A673 (cell line): ENCODE measurements at regions of chr4 and their contacts with region 1.

Region 1: DNA sequence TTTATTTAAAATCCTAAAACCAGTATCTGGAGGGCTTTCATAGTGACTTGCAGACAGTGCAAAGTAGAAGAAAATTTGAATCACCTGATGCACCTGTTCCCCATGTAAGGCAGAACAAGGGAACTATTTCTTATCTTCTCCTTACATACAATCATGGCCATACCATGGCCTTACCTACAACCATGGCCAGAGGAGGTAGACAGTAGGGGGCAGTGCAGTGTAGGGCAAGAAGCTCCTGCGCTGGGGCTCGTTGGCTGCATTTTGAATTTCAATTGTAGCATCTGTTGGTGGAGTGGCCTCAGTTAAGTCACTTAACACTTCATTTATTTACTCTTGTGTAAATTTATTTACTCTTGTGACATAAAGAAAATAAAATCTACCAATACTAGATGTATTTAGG is 33.0 kb downstream of the GALNTL6 start:
- DNase-seq: peak; percentile 78
- H3K4me3 ChIP-seq: no peak overlapping the region
- H3K27ac ChIP-seq: no peak overlapping the region
- H3K4me1 ChIP-seq: no peaks in the 10 kb centered on the region
- H3K27me3 ChIP-seq: no peaks in the 10 kb centered on the region
- CTCF ChIP-seq: peak; percentile 88

Region 2: GRCh38 chr4:170259631-170260153 is 1586.5 kb before region 1 on chr4:
- CTCF ChIA-PET with region 1: no interaction called
- POLR2A ChIA-PET with region 1: no interaction called
- intact Hi-C with region 1: loop called (anchors 5 kb)
- DNase-seq: peak; percentile 95
- H3K4me3 ChIP-seq: no peak overlapping the region
- H3K27ac ChIP-seq: no peak overlapping the region
- H3K4me1 ChIP-seq: no peaks in the 10 kb centered on the region
- H3K27me3 ChIP-seq: peaks cover 19% of the 10 kb centered on the region
- CTCF ChIP-seq: peak; percentile 99

Region 3: GRCh38 chr4:171524903-171525302 is 321.3 kb before region 1 on chr4:
- CTCF ChIA-PET with region 1: no interaction called
- POLR2A ChIA-PET with region 1: no interaction called
- intact Hi-C with region 1: no loop called
- DNase-seq: no peak
- H3K4me3 ChIP-seq: no peak overlapping the region
- H3K27ac ChIP-seq: no peak overlapping the region
- H3K4me1 ChIP-seq: no peaks in the 10 kb centered on the region
- H3K27me3 ChIP-seq: no peaks in the 10 kb centered on the region
- CTCF ChIP-seq: no peak

Region 4: DNA sequence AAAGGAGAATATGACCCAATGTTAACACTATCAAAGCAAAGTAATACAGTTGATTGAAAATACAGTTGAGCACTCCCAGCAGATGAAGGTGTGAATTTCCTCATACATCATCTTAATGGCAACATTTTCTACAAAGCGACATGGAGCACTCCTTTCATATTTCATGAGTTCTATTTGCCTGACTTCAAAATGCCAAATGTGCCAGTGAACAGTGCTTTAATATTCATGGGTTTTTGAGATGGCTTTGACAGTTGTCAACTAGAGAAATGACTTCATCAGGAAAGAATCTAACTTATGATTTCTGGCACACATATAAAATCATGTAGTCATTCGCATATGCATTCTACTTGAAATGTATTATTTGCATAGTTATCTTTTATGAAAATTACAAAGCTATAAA is 189.3 kb after region 1 on chr4:
- CTCF ChIA-PET with region 1: no interaction called
- POLR2A ChIA-PET with region 1: no interaction called
- intact Hi-C with region 1: loop called (anchors 2 kb)
- DNase-seq: peak; percentile 70
- H3K4me3 ChIP-seq: no peak overlapping the region
- H3K27ac ChIP-seq: no peak overlapping the region
- H3K4me1 ChIP-seq: peaks cover 13% of the 10 kb centered on the region
- H3K27me3 ChIP-seq: no peaks in the 10 kb centered on the region
- CTCF ChIP-seq: no peak

Region 5: GRCh38 chr4:172147687-172148086 is 301.5 kb after region 1 on chr4:
- CTCF ChIA-PET with region 1: interaction called, 3 read pairs
- POLR2A ChIA-PET with region 1: no interaction called
- intact Hi-C with region 1: loop called (anchors 5 kb)
- DNase-seq: peak; percentile 33
- H3K4me3 ChIP-seq: no peak overlapping the region
- H3K27ac ChIP-seq: no peak overlapping the region
- H3K4me1 ChIP-seq: no peaks in the 10 kb centered on the region
- H3K27me3 ChIP-seq: no peaks in the 10 kb centered on the region
- CTCF ChIP-seq: no peak; the same call in 1 of the 2 replicates

Region 6: DNA sequence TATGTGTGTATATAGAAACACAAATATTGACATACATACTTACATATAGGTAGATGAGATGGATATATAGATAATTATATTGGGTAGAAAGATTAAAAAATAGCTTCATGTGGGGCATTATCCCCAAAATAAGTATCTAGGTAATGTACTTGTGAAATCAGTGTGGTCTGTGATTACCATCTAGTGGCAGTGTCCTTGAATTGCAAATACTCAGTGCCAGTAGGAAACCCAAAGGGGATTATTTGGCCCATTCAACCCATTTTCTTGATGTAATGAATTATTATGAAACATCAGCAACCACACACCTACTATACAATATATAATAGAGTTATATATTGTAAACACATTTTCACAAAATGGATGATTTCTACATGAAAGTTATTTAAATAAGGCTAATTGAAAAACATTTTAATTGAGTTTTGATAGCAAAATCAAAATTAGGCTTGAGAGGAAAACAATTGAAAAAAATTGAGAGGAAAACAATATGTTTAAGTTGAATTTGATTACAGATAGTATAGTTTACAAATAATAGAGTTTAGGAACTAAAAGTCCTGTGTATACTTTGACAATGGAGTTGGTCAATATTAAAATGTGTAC is 356.3 kb after region 1 on chr4:
- CTCF ChIA-PET with region 1: no interaction called
- POLR2A ChIA-PET with region 1: no interaction called
- intact Hi-C with region 1: loop called (anchors 1 kb)
- DNase-seq: peak; percentile 39
- H3K4me3 ChIP-seq: no peak overlapping the region
- H3K27ac ChIP-seq: no peak overlapping the region
- H3K4me1 ChIP-seq: no peaks in the 10 kb centered on the region
- H3K27me3 ChIP-seq: no peaks in the 10 kb centered on the region
- CTCF ChIP-seq: peak; percentile 76

Region 7: GRCh38 chr4:172666711-172667368 is 820.6 kb after region 1 on chr4:
- CTCF ChIA-PET with region 1: no interaction called
- POLR2A ChIA-PET with region 1: no interaction called
- intact Hi-C with region 1: loop called (anchors 5 kb)
- DNase-seq: peak; percentile 72
- H3K4me3 ChIP-seq: no peak overlapping the region
- H3K27ac ChIP-seq: no peak overlapping the region
- H3K4me1 ChIP-seq: no peaks in the 10 kb centered on the region
- H3K27me3 ChIP-seq: peaks cover 4% of the 10 kb centered on the region
- CTCF ChIP-seq: peak; percentile 70

Region 8: DNA sequence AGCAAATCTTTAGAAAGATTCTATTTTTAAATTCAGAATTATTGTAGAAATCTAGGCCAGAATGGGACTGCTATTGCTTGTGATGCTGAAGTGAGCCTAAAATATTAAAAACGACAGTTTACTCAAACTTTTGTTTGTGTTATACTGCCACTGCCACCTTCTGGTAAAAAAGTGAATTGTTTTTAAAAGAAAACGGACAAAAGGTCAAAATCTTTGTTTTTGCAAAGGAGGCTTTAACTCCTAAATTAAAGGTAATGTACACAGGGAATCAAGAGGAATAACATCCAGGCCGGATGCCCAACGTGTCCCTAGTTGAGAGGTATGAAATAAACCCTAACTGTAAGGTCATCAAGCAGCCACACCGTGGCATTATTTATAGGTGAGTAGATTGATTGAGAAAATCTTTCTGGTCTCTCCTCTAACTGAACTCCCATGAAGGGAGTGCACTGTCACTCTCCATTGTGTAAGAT is 984.1 kb after region 1 on chr4:
- CTCF ChIA-PET with region 1: no interaction called
- POLR2A ChIA-PET with region 1: no interaction called
- intact Hi-C with region 1: loop called (anchors 5 kb)
- DNase-seq: peak; percentile 55
- H3K4me3 ChIP-seq: no peak overlapping the region
- H3K27ac ChIP-seq: no peak overlapping the region
- H3K4me1 ChIP-seq: no peaks in the 10 kb centered on the region
- H3K27me3 ChIP-seq: no peaks in the 10 kb centered on the region
- CTCF ChIP-seq: peak; percentile 60